Mucosa of descending colon (tissue), 3 donors: ENCODE measurements at regions of chr1 and their contacts with region 1.

Region 1: DNA sequence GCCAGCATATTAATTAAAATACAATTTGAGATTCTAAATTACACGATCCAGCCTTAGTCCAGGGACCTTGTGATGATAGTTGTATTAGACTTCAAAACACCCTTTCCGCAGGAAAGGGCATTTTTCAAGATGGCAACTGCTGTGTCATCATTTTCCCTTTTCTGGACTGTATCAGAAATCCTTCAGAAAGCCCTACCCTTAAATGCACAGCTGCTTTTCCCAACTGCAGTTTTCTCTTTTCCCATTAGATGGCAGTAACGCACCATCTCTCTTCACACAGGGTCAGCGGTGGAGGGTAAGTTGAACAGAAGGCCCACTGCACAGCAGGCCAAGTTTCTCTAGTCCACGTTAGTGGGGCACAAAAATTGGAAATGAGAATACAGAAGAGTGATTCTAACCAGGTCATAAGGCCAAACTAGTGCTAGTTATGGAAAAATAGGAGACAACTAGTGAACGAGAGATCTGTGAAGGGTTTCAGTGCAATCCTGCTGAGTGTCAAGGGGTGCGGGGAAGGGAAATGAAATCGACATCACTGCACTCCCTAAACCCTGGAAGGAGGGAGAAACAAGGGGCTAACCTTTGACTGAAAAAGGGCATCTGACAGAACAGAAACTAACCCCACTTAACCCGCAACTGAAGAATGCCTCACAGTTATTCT is 22.1 kb upstream of the TDRD10 start:
- DNase-seq: peak in 1 of 3 donors; percentile 88
- ATAC-seq: peak; percentile 58
- H3K4me3 ChIP-seq: no peak overlapping the region
- H3K4me1 ChIP-seq: peaks cover 12% of the 10 kb centered on the region
- CTCF ChIP-seq: peak; percentile 87

Region 2: GRCh38 chr1:154404984-154405761 is 74.7 kb before region 1 on chr1 and contains the start of gene IL6R:
- intact Hi-C with region 1: loop called in 1 of 2 experiments (anchors 2 kb)
- DNase-seq: peak; percentile 89 to 95 (median 92)
- ATAC-seq: peak; percentile 86
- H3K4me3 ChIP-seq: peak within 1 kb of the TSS; percentile 60
- H3K4me1 ChIP-seq: peaks cover 28% of the 10 kb centered on the region
- CTCF ChIP-seq: peak; percentile 28
- total RNA-seq, gene IL6R: 31.8 to 43.9 (median 42.5) TPM

Region 3: DNA sequence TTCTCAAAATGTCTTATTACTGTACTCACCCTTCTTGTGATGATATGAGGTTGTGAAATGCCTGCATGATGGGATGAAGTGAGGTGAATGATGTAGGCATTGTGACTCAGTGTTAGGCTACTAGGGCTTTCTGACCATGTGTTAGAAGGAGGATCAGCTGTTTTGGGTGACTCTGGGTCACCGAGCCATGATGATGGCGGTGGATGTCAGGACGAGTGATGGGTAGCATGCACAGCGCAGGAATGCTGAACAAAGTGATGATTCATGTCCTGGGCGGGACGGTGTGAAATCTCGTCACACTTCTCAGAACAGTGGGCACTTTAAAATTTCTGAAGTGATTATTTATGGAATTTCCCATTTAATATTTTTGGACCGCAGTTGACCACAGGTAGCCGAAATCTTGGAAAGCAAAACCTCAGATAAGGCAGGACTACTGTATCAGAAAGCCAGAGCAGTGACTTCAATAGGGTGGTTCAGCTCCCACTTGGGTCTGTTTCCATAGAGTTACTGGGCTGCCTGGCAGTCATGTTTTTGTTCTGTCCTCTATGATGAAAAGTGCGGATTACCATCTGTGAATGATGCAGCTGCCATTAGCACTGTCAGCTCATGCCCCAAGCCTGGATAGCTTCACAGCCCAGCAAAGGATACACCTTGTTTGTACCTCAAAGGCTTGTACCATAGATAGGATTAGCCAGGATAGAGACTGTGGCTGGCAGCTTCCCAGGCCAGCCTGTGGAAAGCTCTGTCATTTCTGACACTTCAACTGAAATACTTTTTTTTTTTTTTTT is 48.1 kb before region 1 on chr1:
- intact Hi-C with region 1: no loop called
- DNase-seq: no peak
- ATAC-seq: no peak
- H3K4me3 ChIP-seq: no peak overlapping the region
- H3K4me1 ChIP-seq: peaks cover 34% of the 10 kb centered on the region
- CTCF ChIP-seq: no peak

Region 4: DNA sequence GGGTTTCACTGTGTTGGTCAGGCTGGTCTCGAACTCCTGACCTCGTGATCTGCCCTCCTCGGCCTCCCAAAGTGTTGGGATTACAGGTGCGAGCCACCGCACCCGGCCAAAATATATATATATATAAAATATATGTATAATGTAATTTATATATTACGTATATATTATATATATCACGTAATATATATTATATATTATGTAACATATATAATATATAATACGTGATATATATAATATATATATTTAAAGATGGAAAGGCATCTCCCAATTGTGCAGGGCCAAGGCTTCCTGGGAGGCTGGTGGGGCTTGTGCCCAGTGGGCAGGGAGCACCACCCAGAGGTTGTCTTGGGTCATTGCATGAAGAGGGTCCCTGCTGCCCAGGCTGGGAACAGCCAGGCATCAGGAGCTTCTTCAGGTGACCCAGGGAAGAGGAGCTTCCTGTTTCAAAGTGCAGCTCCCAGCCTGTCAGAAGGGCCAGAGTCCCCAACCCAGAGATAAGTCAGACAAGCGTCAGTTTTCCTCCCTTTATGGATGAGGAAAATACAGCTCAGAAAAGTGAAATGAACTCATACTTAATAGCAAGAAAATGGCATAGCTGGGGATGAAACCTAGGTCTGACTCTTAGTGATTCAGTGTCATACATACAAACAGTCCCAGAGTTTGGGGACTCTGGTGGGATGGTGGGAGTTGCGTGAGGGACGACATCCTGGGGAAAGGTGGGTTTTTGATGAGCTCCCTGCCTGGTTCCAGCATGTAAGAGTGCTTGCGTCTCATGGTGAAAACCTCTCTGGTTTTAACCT is 66.6 kb after region 1 on chr1:
- intact Hi-C with region 1: loop called (anchors 10 kb)
- DNase-seq: peak in 2 of 3 donors; percentile 46 to 58
- ATAC-seq: peak; percentile 67
- H3K4me3 ChIP-seq: no peak overlapping the region
- H3K4me1 ChIP-seq: peaks cover 10% of the 10 kb centered on the region
- CTCF ChIP-seq: no peak

Region 5: GRCh38 chr1:154870115-154870571 is 390.2 kb after region 1 on chr1 and contains the start of gene KCNN3:
- intact Hi-C with region 1: loop called in 1 of 2 experiments (anchors 10 kb)
- DNase-seq: peak; percentile 90 to 92 (median 91)
- ATAC-seq: peak; percentile 98
- H3K4me3 ChIP-seq: no peak within 1 kb of the TSS
- H3K4me1 ChIP-seq: no peaks in the 10 kb centered on the region
- CTCF ChIP-seq: no peak
- total RNA-seq, gene KCNN3: 1.5 to 19.3 (median 2.0) TPM

Region 6: GRCh38 chr1:155038602-155039307 is 558.9 kb after region 1 on chr1:
- intact Hi-C with region 1: no loop called
- DNase-seq: peak in 2 of 3 donors; percentile 64 to 76
- ATAC-seq: peak; percentile 92
- H3K4me3 ChIP-seq: no peak overlapping the region
- H3K4me1 ChIP-seq: peaks cover 20% of the 10 kb centered on the region
- CTCF ChIP-seq: no peak